K562 (cell line): ENCODE measurements at regions of chr18 and their contacts with region 1.

Region 1: GRCh38 chr18:10591896-10592295 is 66.1 kb downstream of the NAPG start:
- DNase-seq: no peak
- ATAC-seq: no peak
- H3K4me3 ChIP-seq: no peak overlapping the region
- H3K27ac ChIP-seq: no peak overlapping the region
- H3K4me1 ChIP-seq: peaks cover 12 to 18% of the 10 kb centered on the region in 2 experiments
- H3K27me3 ChIP-seq: no peaks in the 10 kb centered on the region
- CTCF ChIP-seq: no peak
- EP300 ChIP-seq: no peak
- POLR2A ChIP-seq: no peak
- RAD21 ChIP-seq: no peak

Region 2: GRCh38 chr18:11923450-11923849 is 1331.6 kb after region 1 on chr18:
- CTCF ChIA-PET with region 1: no interaction called
- POLR2A ChIA-PET with region 1: no interaction called
- in situ Hi-C with region 1: loop called (anchors 5 kb)
- intact Hi-C with region 1: no loop called
- DNase-seq: peak in 3 of 4 experiments; percentile 24 to 53 (median 33)
- ATAC-seq: no peak; the same call in 2 of the 3 replicates
- H3K4me3 ChIP-seq: no peak overlapping the region
- H3K27ac ChIP-seq: no peak overlapping the region
- H3K4me1 ChIP-seq: peaks cover 3 to 7% of the 10 kb centered on the region in 2 experiments; a peak in 3 of 5 replicates
- H3K27me3 ChIP-seq: peaks cover 4 to 12% of the 10 kb centered on the region in 2 experiments; a peak in 2 of 5 replicates
- CTCF ChIP-seq: no peak
- EP300 ChIP-seq: peak; percentile 13; the same call in 1 of the 2 replicates
- POLR2A ChIP-seq: no peak
- RAD21 ChIP-seq: no peak